ENCODE measurements at regions of chr20 and their contacts with region 1.

Region 1: GRCh38 chr20:58330687-58331086 is 21.2 kb downstream of the RAB22A start:
- DNase-seq: no peak
- H3K4me3 ChIP-seq: no peak overlapping the region
- H3K27ac ChIP-seq: no peak overlapping the region
- H3K4me1 ChIP-seq: peaks cover 0 to 4% (median 1%) of the 10 kb centered on the region in 4 donors
- H3K27me3 ChIP-seq: no peaks in the 10 kb centered on the region
- CTCF ChIP-seq: no peak

Region 2: GRCh38 chr20:58956106-58956505 is 625.4 kb after region 1 on chr20:
- intact Hi-C with region 1: loop called (anchors 5 kb)
- DNase-seq: no peak
- H3K4me3 ChIP-seq: no peak overlapping the region
- H3K27ac ChIP-seq: no peak overlapping the region
- H3K4me1 ChIP-seq: no peaks in the 10 kb centered on the region
- H3K27me3 ChIP-seq: no peaks in the 10 kb centered on the region
- CTCF ChIP-seq: no peak